Thyroid gland (tissue), 4 donors: ENCODE measurements at regions of chr6 and their contacts with region 1.

Region 1: DNA sequence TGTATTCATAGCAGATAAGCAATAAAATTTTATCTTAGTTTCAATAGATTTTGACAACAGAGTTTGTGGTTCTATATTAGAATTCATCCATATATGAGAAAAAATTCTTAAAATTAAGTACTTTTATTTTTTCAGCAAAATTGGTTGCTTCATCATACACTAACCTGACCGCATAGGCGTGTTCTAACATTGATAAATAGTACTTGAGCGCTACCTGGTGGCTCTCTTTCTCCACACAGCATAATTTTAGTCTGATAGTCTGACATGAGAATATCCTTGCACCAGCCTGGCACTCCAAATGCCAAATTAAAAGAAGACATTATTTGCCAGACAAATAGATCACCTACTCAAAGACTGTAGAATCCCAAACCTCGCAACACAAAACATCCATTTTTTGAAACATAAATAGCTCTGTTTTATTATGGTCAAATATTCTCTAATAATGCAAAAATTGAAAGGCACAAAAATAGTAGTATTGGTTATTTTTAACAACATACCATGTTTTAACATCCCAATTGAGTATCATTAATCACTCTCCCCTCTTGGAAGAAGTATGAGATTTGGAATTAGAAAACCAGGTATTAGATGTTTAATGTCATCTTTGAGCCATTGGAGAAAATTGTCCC is 33.0 kb upstream of the FILIP1 start:
- DNase-seq: peak; percentile 61 to 63
- H3K4me3 ChIP-seq: no peak overlapping the region
- H3K27ac ChIP-seq: no peak overlapping the region
- H3K4me1 ChIP-seq: no peaks in the 10 kb centered on the region
- H3K27me3 ChIP-seq: no peaks in the 10 kb centered on the region
- CTCF ChIP-seq: peak in 5 of 6 experiments; percentile 54 to 87 (median 75)
- POLR2A ChIP-seq: no peak

Region 2: GRCh38 chr6:75266716-75267291 is 259.8 kb before region 1 on chr6:
- intact Hi-C with region 1: loop called (anchors 10 kb)
- DNase-seq: no peak
- H3K4me3 ChIP-seq: no peak overlapping the region
- H3K27ac ChIP-seq: no peak overlapping the region
- H3K4me1 ChIP-seq: peaks cover 15 to 21% of the 10 kb centered on the region in 2 donors
- H3K27me3 ChIP-seq: no peaks in the 10 kb centered on the region
- CTCF ChIP-seq: peak; percentile 39 to 81 (median 62)
- POLR2A ChIP-seq: no peak

Region 3: GRCh38 chr6:75296811-75297779 is 229.5 kb before region 1 on chr6:
- intact Hi-C with region 1: loop called (anchors 5 kb)
- DNase-seq: no peak
- H3K4me3 ChIP-seq: no peak overlapping the region
- H3K27ac ChIP-seq: no peak overlapping the region
- H3K4me1 ChIP-seq: no peaks in the 10 kb centered on the region
- H3K27me3 ChIP-seq: no peaks in the 10 kb centered on the region
- CTCF ChIP-seq: peak; percentile 43 to 71 (median 64)
- POLR2A ChIP-seq: no peak

Region 4: DNA sequence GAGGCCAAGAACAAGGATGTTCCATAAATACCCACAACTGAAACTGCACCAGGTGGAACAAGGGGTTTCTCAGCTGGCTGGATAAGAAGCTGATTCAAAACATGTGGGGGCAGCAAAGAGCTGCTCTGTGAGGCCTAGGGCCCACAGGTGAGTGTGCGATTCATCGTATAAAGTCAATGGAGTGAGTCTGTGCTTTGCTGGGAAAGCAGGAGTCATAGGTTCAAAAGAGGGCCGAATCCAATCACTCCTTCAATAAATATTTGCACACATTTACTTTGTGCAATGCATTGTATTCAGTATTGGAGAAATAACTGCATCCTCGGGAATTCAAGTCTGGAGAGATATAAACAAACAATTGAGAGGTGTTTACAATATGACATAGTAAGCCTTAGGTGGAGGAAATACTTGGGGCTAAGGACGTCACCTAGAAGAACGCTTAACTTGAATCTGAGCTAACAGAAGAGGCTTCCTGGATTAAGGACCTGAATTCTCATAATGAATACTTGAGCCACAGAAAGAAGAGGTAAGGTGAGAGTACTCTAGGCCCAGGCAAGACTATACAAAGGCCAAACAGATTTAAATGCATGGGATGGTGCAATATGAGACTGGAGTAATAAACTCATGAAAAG is 158.3 kb before region 1 on chr6:
- intact Hi-C with region 1: loop called (anchors 10 kb)
- DNase-seq: peak; percentile 49 to 56
- H3K4me3 ChIP-seq: no peak overlapping the region
- H3K27ac ChIP-seq: no peak overlapping the region
- H3K4me1 ChIP-seq: peaks cover 0 to 5% of the 10 kb centered on the region in 2 donors
- H3K27me3 ChIP-seq: no peaks in the 10 kb centered on the region
- CTCF ChIP-seq: peak in 4 of 6 experiments; percentile 13 to 62 (median 54)
- POLR2A ChIP-seq: no peak

Region 5: GRCh38 chr6:75437421-75437891 is 89.2 kb before region 1 on chr6:
- intact Hi-C with region 1: no loop called
- DNase-seq: no peak
- H3K4me3 ChIP-seq: no peak overlapping the region
- H3K27ac ChIP-seq: no peak overlapping the region
- H3K4me1 ChIP-seq: peaks cover 0 to 5% of the 10 kb centered on the region in 2 donors
- H3K27me3 ChIP-seq: no peaks in the 10 kb centered on the region
- CTCF ChIP-seq: no peak
- POLR2A ChIP-seq: no peak

Region 6: GRCh38 chr6:75748743-75749501 is 222.3 kb after region 1 on chr6 and contains the start of gene MYO6:
- intact Hi-C with region 1: no loop called
- DNase-seq: peak; percentile 78 to 80
- H3K4me3 ChIP-seq: peak within 1 kb of the TSS; percentile 92 to 99 (median 99)
- H3K27ac ChIP-seq: peak within 1 kb of the TSS; percentile 84 to 95 (median 85)
- H3K4me1 ChIP-seq: peaks cover 8 to 23% of the 10 kb centered on the region in 2 donors
- H3K27me3 ChIP-seq: no peaks in the 10 kb centered on the region
- CTCF ChIP-seq: no peak
- POLR2A ChIP-seq: peak; percentile 71 to 94
- total RNA-seq, gene MYO6: 36.1 to 45.3 (median 39.1) TPM